Activated CD8-positive, alpha-beta T cell treated with anti-CD3 and anti-CD28 coated beads, Interleukin-2, amount 10 ng/mL, durations not matched to agents 7 days and 5 days (primary cell): ENCODE measurements at regions of chr1 and their contacts with region 1.

Region 1: DNA sequence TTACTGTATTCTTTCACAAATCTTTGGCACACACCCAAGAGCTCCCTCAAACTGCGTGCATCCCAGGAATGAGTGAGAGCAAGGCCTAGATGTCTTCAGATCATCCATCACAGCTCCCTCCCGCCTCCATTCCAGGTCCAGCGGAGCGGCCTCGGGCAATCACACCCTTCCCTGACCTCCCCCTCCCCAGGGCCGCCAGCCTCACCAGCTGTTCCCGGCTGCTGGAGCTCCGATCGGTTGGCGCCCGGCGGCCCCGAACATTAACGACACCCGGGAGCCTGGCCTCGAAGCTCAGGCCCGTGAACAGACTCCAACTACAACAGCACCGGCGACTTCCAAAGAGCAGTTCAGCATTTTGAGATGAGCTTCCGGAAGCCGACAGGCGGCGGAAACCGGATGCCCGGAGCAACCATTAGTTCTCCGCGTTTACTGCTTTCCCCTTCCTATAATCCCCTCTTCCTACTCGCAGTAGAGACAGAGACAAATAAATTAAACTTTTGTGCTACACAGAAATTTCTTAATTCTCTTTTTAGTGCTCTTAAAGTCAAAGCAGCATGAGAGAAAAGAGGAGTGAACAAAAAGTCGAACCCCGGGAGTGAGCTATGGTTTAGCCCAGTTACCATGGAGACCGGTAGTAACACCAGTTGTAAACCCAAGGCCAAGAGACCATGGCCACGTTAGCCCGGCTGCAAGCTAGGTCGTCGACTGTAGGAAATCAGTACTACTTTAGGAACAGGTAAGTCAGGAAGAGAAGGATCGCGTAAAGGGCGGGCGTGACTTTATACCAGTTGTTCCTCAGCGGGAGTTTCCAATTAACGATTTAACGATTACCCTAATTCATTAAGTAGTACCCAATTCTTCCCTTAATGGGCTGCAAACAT is at the starts of genes GPATCH2 and SPATA17:
- DNase-seq: peak; percentile 85
- ATAC-seq: peak; percentile 94
- H3K4me3 Mint-ChIP-seq: peak within 1 kb of the TSS; percentile 86
- H3K27ac Mint-ChIP-seq: peak within 1 kb of the TSS; percentile 98
- H3K4me1 Mint-ChIP-seq: peaks cover 24% of the 10 kb centered on the region
- H3K27me3 Mint-ChIP-seq: peaks cover 5% of the 10 kb centered on the region
- total RNA-seq, gene GPATCH2: 10.0 to 10.7 TPM
- total RNA-seq, gene SPATA17: not detected

Region 2: DNA sequence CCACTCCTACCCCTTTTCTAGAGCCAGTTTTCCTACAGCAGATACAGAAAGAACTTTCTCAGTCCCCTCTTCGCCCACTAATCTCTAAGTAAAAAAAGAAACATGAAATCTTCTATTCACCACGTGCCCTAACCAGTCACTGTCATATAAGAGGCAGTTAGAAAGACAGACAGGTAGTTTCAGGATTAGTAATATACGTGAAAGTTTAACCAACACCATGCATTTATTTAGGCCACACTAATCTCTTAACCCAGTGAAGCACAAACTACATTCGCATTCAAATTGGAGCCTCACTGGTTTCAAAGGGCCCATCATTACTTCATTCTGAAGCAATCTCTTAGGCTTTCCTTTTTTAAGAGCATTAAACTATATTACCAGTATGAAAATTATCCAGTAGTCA is 10.1 kb before region 1 on chr1:
- CTCF ChIA-PET with region 1: interaction called, 6 read pairs
- POLR2A ChIA-PET with region 1: interaction called, 20 read pairs
- DNase-seq: no peak
- ATAC-seq: no peak
- H3K4me3 Mint-ChIP-seq: no peak overlapping the region
- H3K27ac Mint-ChIP-seq: no peak overlapping the region
- H3K4me1 Mint-ChIP-seq: peaks cover 13% of the 10 kb centered on the region
- H3K27me3 Mint-ChIP-seq: no peaks in the 10 kb centered on the region

Region 3: DNA sequence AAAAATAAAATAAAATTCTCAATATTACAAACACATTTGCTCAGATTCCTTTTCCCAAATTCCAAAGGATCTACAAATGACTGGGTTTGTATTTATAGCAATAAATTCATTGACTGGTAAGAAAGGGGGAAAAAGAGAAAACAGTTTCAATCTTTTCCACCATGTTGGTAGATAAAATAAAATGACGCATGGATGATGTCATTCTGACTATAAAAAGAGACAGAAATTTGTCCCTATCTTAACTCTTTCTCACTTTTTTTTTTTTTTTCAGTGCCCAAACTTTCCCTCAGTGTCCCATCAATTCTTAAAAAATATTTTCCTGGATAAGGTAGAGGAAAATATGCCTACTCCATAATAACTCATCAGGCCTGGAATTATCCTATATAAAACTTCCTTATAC is 18.5 kb after region 1 on chr1:
- CTCF ChIA-PET with region 1: no interaction called
- POLR2A ChIA-PET with region 1: no interaction called
- DNase-seq: no peak
- ATAC-seq: no peak
- H3K4me3 Mint-ChIP-seq: no peak overlapping the region
- H3K27ac Mint-ChIP-seq: no peak overlapping the region
- H3K4me1 Mint-ChIP-seq: no peaks in the 10 kb centered on the region
- H3K27me3 Mint-ChIP-seq: peaks cover 2% of the 10 kb centered on the region